GM10248 (cell line): ENCODE measurements at regions of chr1 and their contacts with region 1.

Region 1: GRCh38 chr1:27392096-27392777 is at the start of gene GPR3:
- DNase-seq: peak; percentile 94
- CTCF ChIP-seq: peak; percentile 57

Region 2: DNA sequence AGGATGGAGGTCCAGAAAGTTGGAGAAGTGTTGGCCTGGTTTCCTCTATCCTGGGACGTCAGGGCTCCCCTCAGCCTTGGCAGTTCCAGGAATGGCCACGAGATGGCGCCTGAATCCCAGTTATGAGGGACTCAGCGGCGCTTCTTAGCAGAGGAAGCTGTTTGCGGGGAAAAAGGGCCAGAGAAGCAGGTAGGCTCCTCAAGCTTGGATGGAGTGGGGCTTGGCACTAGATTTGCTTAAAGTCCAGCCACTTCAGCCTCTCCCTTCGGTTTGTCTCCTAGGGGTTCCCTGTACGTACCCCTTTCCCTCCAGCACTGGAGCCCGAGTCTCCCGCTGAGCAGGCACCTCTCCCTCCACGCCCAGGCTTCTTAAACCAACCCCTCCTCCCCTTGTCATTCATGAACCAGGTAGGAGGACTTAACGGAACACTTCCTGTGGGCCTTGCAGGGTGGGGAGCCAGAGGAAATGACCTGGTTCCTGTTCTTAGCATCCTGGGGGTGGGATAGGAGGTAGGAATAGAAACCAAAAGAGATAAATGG is 347.6 kb before region 1 on chr1:
- CTCF ChIA-PET with region 1: interaction called, 33 read pairs
- POLR2A ChIA-PET with region 1: no interaction called
- DNase-seq: peak; percentile 87
- CTCF ChIP-seq: peak; percentile 99

Region 3: GRCh38 chr1:27274204-27274603 is 118.0 kb before region 1 on chr1:
- CTCF ChIA-PET with region 1: no interaction called
- POLR2A ChIA-PET with region 1: no interaction called
- DNase-seq: no peak
- CTCF ChIP-seq: no peak

Region 4: GRCh38 chr1:27332536-27333281 is 59.5 kb before region 1 on chr1:
- CTCF ChIA-PET with region 1: interaction called, 55 read pairs
- POLR2A ChIA-PET with region 1: no interaction called
- DNase-seq: peak; percentile 77
- CTCF ChIP-seq: peak; percentile 81

Region 5: DNA sequence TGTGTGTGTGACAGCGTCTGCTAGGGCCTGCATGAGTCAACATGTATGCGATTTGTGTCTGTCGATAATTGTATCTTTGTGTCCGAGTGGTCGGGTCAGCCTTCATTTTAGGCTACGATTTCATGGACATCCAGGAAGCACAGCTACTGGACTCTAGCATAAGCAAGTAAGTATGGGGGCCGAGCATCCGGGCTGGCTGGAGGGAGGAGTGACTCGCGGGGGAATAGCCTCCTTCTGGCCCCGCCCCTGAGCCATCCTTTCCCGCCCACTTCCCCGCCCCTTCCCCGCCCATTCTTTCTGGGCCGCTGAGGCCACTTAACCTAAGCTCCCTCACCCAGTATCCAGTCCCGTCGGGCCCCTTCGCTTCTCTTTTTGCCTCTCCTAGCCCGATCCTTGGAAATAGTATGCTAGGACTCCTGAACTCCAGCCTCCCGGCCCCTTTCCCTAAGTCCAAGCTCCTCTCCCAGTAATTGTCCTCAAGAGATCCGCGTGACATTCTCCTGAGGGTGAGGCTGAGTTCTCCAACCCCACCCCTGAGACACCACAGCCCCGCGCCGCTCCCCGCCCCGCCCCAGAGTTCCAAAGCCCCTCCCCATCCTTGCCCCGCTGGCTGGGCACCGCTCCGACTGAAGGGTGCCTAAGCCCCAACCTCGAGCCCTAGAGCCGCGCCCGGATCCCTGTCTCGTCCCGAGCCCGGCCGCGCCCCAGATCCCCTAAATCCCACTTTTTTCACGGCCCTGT is 26.7 kb before region 1 on chr1:
- CTCF ChIA-PET with region 1: interaction called, 40 read pairs
- POLR2A ChIA-PET with region 1: no interaction called
- DNase-seq: peak; percentile 94
- CTCF ChIP-seq: no peak

Region 6: DNA sequence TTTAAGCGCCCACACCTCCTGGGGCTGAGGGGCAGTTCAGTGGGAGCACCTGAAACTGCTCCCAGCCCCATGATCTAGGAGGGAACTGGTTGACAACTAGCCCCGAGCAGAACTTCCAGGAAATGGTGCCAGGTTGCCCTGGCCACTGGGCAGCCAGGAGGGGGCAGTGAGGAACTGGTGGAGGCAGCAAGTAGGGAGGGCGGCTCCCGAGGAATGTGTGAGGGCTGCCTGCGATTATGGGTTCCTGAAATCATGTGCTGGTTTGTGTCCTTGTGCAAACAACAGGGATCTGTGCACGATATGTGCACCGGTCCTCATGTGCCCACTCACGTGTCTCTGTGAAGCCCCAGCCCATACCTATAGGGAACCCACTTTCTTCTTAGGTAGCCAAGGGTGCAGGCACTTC is 10.1 kb after region 1 on chr1:
- CTCF ChIA-PET with region 1: interaction called, 33 read pairs
- POLR2A ChIA-PET with region 1: no interaction called
- DNase-seq: no peak
- CTCF ChIP-seq: peak; percentile 44

Region 7: GRCh38 chr1:27445177-27445936 is 53.1 kb after region 1 on chr1:
- CTCF ChIA-PET with region 1: no interaction called
- POLR2A ChIA-PET with region 1: no interaction called
- DNase-seq: peak; percentile 54
- CTCF ChIP-seq: no peak

Region 8: GRCh38 chr1:27940297-27940696 is 548.1 kb after region 1 on chr1:
- CTCF ChIA-PET with region 1: no interaction called
- POLR2A ChIA-PET with region 1: no interaction called
- DNase-seq: peak; percentile 70
- CTCF ChIP-seq: peak; percentile 43